K562 (cell line): ENCODE measurements at regions of chr1 and their contacts with region 1.

Region 1: DNA sequence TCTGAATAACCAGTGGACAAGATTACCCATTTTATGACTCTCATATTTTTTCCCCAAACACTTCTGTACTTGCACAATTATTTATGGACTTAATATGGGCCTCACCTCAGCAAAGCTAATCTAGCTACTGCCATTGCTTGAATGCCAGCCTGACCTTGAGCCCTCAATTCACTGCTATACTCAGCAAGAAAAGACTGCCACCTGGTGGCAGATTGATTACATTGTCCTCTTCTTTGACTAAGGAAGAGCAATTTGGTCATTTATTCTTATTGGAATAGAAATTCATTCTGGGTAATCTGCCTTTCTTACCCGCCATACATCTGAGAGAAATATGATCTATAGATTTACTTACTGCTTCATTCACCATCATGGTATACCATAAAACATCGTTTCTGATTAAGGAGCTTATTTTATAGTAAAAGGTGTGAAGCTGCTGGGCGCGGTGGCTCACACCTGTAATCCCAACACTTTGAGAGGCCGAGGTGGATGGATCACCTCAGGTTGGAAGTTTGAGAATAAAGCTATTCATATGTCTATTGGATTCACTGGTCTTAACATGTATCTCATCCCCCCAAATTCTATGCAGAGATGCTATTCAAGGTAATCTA is 32.9 kb upstream of the DIPK1A start:
- DNase-seq: peak; percentile 68 to 91 (median 70)
- ATAC-seq: peak; percentile 82
- H3K4me3 ChIP-seq: no peak overlapping the region
- H3K27ac ChIP-seq: no peak overlapping the region; the same call in 2 of the 3 replicates
- H3K4me1 ChIP-seq: peaks cover 0 to 34% of the 10 kb centered on the region in 2 experiments; a peak in 3 of 5 replicates
- H3K27me3 ChIP-seq: no peaks in the 10 kb centered on the region
- CTCF ChIP-seq: peak; percentile 78 to 91 (median 90)
- EP300 ChIP-seq: no peak
- POLR2A ChIP-seq: no peak
- RAD21 ChIP-seq: peak; percentile 98 to 99

Region 2: DNA sequence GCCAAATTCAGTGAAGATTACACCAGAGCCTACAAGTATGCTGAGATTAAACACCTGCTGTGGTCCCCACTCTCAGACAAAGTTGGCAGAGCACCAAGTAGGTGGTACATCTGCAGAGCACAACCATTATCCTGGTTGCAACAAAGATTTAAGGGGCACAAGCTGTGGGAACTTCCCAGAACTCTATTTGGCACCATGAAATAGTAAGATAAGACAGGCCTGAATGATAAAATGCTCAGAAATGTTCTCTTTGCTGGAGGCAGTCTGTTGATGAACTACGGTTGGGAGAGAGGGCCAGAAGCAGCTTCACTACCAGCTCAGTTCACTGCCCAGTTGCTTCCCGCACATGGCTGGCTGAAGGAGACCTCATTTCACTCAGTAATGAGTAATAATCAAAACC is 142.5 kb before region 1 on chr1:
- CTCF ChIA-PET with region 1: interaction called, 125 read pairs
- POLR2A ChIA-PET with region 1: interaction called, 4 read pairs
- in situ Hi-C with region 1: loop called (anchors 5 kb)
- intact Hi-C with region 1: no loop called
- DNase-seq: peak in 1 of 4 experiments; percentile 38
- ATAC-seq: peak; percentile 50
- H3K4me3 ChIP-seq: peak overlapping the region; percentile 7
- H3K27ac ChIP-seq: no peak overlapping the region
- H3K4me1 ChIP-seq: peaks cover 14 to 19% of the 10 kb centered on the region in 2 experiments; a peak in 4 of 5 replicates
- H3K27me3 ChIP-seq: no peaks in the 10 kb centered on the region
- CTCF ChIP-seq: no peak
- EP300 ChIP-seq: no peak
- POLR2A ChIP-seq: no peak
- RAD21 ChIP-seq: no peak

Region 3: GRCh38 chr1:92901699-92902405 is 92.4 kb before region 1 on chr1:
- CTCF ChIA-PET with region 1: no interaction called
- POLR2A ChIA-PET with region 1: no interaction called
- in situ Hi-C with region 1: no loop called
- intact Hi-C with region 1: loop called (anchors 1 kb)
- DNase-seq: no peak
- ATAC-seq: peak; percentile 70
- H3K4me3 ChIP-seq: no peak overlapping the region
- H3K27ac ChIP-seq: no peak overlapping the region
- H3K4me1 ChIP-seq: 0 out of 5 replicates have a peak, but pooled peaks cover 0 to 5% of the 10 kb centered on the region in 2 experiments
- H3K27me3 ChIP-seq: no peaks in the 10 kb centered on the region
- CTCF ChIP-seq: no peak
- EP300 ChIP-seq: no peak
- POLR2A ChIP-seq: no peak
- RAD21 ChIP-seq: no peak

Region 4: GRCh38 chr1:92960395-92961130 is 33.6 kb before region 1 on chr1:
- CTCF ChIA-PET with region 1: interaction called, 5 read pairs
- POLR2A ChIA-PET with region 1: interaction called, 4 read pairs
- in situ Hi-C with region 1: loop called (anchors 5 kb)
- intact Hi-C with region 1: loop called (anchors 2 kb)
- DNase-seq: peak; percentile 54 to 72 (median 61)
- ATAC-seq: peak; percentile 70
- H3K4me3 ChIP-seq: peak overlapping the region; percentile 57
- H3K27ac ChIP-seq: no peak overlapping the region
- H3K4me1 ChIP-seq: peaks cover 28% of the 10 kb centered on the region in 2 experiments
- H3K27me3 ChIP-seq: no peaks in the 10 kb centered on the region
- CTCF ChIP-seq: peak; percentile 76 to 79 (median 78)
- EP300 ChIP-seq: no peak
- POLR2A ChIP-seq: no peak
- RAD21 ChIP-seq: peak; percentile 74 to 84

Region 5: DNA sequence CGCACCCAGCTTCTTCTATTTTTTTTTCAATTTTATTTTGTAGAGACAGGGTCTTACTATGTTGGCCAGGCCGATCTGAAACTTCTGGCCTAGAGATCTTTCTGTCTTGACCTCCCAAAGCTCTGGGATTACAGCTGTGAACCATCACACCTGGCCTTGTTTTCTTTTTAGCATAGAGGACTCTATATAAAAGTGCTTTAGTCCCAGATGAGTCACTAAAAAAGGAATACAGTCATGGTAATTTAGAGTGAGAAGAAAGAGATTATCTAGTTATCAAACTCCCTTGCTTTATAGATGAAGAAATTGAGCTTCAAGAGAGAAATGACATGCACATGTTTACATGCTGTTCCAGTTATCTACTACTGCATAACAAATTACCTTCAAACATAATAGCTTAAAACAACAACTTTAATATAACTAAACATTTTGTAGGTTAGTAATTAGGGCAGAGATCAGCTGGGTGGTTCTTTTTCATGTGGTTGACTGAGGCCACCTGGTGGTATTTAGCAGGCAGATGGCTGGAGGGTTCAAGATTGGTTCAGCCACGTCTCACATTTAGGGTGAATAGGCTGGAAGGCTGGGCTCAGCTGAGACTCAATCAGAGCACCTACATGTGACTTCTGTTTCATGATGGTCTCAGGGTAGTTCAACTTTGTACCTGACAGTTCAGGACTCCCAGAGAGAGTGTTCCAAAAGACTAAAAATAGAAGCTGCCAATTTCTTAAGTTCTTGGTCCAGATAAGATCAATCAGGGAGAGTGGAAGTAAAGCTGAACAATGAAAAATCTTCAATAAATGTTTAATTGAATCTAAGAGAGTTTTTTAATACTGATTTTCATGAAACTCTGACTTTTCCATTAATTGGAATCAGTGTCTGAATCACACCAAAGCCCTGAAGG is 67.9 kb after region 1 on chr1:
- CTCF ChIA-PET with region 1: interaction called, 4 read pairs
- POLR2A ChIA-PET with region 1: no interaction called
- in situ Hi-C with region 1: no loop called
- intact Hi-C with region 1: loop called (anchors 2 kb)
- DNase-seq: peak; percentile 16 to 66 (median 40)
- ATAC-seq: peak; percentile 99
- H3K4me3 ChIP-seq: no peak overlapping the region
- H3K27ac ChIP-seq: no peak overlapping the region
- H3K4me1 ChIP-seq: no peaks in the 10 kb centered on the region
- H3K27me3 ChIP-seq: no peaks in the 10 kb centered on the region; a peak in 1 of 5 replicates
- CTCF ChIP-seq: peak; percentile 77 to 91 (median 78)
- EP300 ChIP-seq: no peak
- POLR2A ChIP-seq: no peak
- RAD21 ChIP-seq: peak; percentile 96